ENCODE measurements at regions of chr11 and their contacts with region 1.

Region 1: DNA sequence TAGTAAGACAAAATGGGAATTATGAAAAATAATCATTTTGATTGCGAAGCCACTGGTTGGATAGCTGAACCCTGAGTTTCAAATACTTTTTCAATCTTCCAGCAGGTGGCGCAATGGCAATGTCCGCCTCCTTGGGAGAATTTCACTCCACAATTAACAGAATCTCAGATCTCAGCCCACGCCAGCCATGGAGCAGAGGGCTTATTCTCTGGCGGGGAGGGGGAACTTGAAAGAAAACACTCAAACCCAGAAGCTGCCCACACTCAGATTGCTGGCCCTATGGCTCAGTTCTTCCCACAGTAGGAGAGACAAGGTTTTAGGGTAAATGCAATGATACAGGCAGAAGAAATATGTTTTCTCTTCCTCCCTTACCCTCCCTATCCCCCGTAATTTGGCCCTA is 38.7 kb upstream of the RCN1 start:
- DNase-seq: peak; percentile 72
- H3K4me3 Mint-ChIP-seq: no peak overlapping the region
- H3K27ac Mint-ChIP-seq: no peak overlapping the region
- H3K4me1 Mint-ChIP-seq: peaks cover 6% of the 10 kb centered on the region
- H3K27me3 Mint-ChIP-seq: peaks cover 45% of the 10 kb centered on the region
- CTCF ChIP-seq: peak; percentile 74

Region 2: DNA sequence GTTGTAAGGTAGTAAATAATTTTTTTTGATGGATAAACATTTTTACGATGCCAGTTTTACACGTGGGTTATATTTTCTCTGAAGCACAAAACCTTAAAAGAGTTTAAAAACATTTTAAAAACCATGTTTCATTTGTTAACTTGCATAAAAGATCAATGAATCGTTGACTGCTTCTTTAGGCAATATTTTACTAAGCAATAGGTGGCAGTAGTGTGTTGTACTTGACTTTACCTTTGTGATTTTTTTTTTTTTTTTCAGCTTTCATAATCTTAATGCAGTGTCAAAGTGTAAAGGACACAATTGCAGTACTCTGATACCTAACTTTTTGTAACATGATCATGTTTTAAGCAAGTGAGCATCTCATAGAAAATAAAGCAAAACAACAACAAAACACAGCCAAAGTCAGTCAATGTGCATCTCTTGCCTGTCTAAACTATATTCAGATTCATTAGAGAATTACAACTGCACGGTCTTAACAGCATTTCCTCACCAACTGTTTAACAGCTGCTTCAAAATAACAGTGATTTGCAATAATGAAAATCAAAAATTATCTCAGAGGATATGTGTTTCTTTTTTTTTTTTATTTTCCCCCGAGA is 654.9 kb before region 1 on chr11:
- CTCF ChIA-PET with region 1: interaction called, 12 read pairs
- POLR2A ChIA-PET with region 1: no interaction called
- intact Hi-C with region 1: no loop called
- DNase-seq: peak; percentile 31
- H3K4me3 Mint-ChIP-seq: no peak overlapping the region
- H3K27ac Mint-ChIP-seq: no peak overlapping the region
- H3K4me1 Mint-ChIP-seq: no peaks in the 10 kb centered on the region
- H3K27me3 Mint-ChIP-seq: no peaks in the 10 kb centered on the region
- CTCF ChIP-seq: peak; percentile 54

Region 3: GRCh38 chr11:32071811-32072210 is 19.6 kb after region 1 on chr11:
- CTCF ChIA-PET with region 1: interaction called, 70 read pairs
- POLR2A ChIA-PET with region 1: interaction called, 3 read pairs
- intact Hi-C with region 1: no loop called
- DNase-seq: peak; percentile 57
- H3K4me3 Mint-ChIP-seq: no peak overlapping the region
- H3K27ac Mint-ChIP-seq: no peak overlapping the region
- H3K4me1 Mint-ChIP-seq: no peaks in the 10 kb centered on the region
- H3K27me3 Mint-ChIP-seq: peaks cover 66% of the 10 kb centered on the region
- CTCF ChIP-seq: peak; percentile 35

Region 4: DNA sequence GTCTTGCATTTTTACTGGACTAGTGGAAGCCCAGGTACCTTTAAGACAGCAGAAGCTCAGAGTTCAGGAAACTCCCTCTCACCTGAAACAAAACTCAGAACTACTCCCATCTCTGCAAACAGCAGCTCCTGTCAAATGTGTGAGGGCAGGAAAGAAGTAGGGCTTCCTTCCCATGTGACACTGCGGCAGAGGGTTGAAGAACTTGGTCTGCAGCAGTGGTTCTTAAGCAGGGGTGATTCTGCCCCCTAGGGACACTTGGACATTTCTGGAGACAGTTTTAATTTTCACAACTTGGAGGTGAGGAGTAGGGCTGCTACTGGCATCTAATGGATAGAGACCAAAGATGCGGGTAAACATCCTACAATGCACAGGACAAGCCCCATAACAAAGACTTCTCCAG is 102.1 kb after region 1 on chr11:
- CTCF ChIA-PET with region 1: interaction called, 31 read pairs
- POLR2A ChIA-PET with region 1: no interaction called
- intact Hi-C with region 1: loop called (anchors 1 kb)
- DNase-seq: peak; percentile 46
- H3K4me3 Mint-ChIP-seq: no peak overlapping the region
- H3K27ac Mint-ChIP-seq: no peak overlapping the region
- H3K4me1 Mint-ChIP-seq: no peaks in the 10 kb centered on the region
- H3K27me3 Mint-ChIP-seq: peaks cover 52% of the 10 kb centered on the region
- CTCF ChIP-seq: peak; percentile 37

Region 5: GRCh38 chr11:32297611-32298011 is 245.4 kb after region 1 on chr11:
- CTCF ChIA-PET with region 1: interaction called, 95 read pairs
- POLR2A ChIA-PET with region 1: interaction called, 4 read pairs
- intact Hi-C with region 1: loop called (anchors 1 kb)
- DNase-seq: peak; percentile 50
- H3K4me3 Mint-ChIP-seq: no peak overlapping the region
- H3K27ac Mint-ChIP-seq: no peak overlapping the region
- H3K4me1 Mint-ChIP-seq: no peaks in the 10 kb centered on the region
- H3K27me3 Mint-ChIP-seq: no peaks in the 10 kb centered on the region
- CTCF ChIP-seq: peak; percentile 39